ENCODE measurements at regions of chr4 and their contacts with region 1.

Region 1: DNA sequence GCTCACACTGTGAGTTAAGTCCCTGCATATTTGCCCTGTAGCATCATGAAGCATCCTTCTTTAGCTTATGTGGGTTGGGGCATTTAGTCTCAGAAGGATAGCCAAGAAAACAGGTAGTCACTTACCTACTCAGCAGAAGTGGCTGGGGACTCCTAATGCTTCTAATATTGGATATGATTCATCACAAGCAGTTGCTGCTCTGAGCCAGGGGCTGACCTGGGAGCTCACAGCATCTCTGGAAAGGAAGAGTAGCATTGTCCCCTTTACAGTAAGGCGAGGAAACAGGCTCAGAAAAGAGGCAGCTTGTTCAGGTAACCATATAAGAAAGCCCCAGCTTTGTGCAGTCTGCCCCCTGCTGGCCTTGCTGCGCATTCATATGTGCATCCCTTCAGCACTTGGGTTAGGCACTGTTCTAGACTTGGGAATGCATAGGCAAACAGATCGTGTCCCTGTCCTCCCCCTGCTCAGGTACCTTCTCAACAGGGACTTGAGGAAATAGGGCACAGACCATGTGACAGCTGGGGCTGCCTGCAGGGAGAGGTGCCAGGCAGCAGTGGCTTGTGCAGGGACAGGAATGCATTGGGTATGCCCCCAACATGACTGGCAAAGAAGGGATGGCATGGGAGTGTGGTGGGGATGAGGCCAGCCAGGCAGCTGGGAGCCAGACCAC is 35.7 kb upstream of the TBC1D14 start:
- DNase-seq: peak; percentile 79
- H3K4me3 ChIP-seq: no peak overlapping the region
- H3K27ac ChIP-seq: no peak overlapping the region
- H3K4me1 ChIP-seq: no peaks in the 10 kb centered on the region
- H3K27me3 ChIP-seq: no peaks in the 10 kb centered on the region
- CTCF ChIP-seq: peak; percentile 79 to 85 (median 83)
- EP300 ChIP-seq: no peak
- POLR2A ChIP-seq: no peak

Region 2: DNA sequence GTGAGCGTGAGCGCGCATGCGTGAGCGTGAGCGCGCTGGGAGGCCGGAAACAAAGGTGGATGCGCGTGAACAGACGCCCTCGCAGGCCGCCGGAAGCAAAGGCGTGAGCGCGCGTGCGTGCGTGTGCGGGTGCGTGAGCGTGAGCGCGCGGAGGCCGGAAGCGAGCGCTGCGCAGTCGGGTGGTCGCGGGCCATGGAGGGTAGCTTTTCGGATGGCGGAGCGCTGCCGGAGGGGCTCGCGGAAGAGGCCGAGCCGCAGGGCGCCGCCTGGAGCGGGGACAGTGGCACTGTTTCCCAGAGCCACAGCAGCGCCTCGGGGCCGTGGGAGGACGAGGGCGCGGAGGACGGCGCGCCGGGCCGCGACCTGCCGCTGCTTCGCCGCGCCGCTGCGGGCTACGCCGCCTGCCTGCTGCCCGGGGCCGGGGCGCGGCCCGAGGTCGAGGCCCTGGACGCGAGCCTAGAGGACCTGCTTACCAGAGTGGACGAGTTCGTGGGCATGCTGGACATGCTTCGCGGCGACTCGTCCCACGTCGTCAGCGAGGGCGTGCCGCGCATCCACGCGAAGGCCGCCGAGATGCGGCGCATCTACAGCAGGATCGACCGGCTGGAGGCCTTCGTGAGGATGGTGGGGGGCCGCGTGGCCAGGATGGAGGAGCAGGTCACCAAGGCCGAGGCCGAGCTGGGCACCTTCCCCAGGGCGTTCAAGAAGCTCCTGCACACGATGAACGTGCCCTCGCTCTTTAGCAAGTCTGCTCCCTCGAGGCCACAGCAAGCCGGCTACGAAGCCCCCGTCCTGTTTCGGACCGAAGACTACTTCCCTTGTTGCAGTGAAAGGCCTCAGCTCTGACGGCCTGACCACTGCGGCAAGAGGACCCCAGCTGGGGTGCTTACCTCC is 157.7 kb before region 1 on chr4 and contains the start of gene BLOC1S4:
- in situ Hi-C with region 1: loop called in 2 of 4 experiments (anchors 5 to 25 kb)
- intact Hi-C with region 1: loop called (anchors 2 kb)
- DNase-seq: peak; percentile 90
- H3K4me3 ChIP-seq: peak within 1 kb of the TSS; percentile 69 to 84 (median 74)
- H3K27ac ChIP-seq: peak within 1 kb of the TSS; percentile 92 to 94 (median 93)
- H3K4me1 ChIP-seq: peaks cover 4 to 26% (median 12%) of the 10 kb centered on the region in 4 donors
- H3K27me3 ChIP-seq: no peaks in the 10 kb centered on the region
- CTCF ChIP-seq: peak in 2 of 5 experiments; percentile 10 to 41
- EP300 ChIP-seq: no peak
- POLR2A ChIP-seq: peak; percentile 84
- total RNA-seq, gene BLOC1S4: 1.00 to 18.8 (median 12.4) TPM

Region 3: GRCh38 chr4:6732441-6733357 is 141.2 kb before region 1 on chr4:
- in situ Hi-C with region 1: loop called in 2 of 4 experiments (anchors 5 to 10 kb)
- intact Hi-C with region 1: no loop called
- DNase-seq: peak; percentile 68
- H3K4me3 ChIP-seq: no peak overlapping the region
- H3K27ac ChIP-seq: peak overlapping the region in 3 of 4 donors; percentile 14 to 63 (median 41)
- H3K4me1 ChIP-seq: peaks cover 0 to 11% (median 9%) of the 10 kb centered on the region in 4 donors
- H3K27me3 ChIP-seq: no peaks in the 10 kb centered on the region
- CTCF ChIP-seq: no peak
- EP300 ChIP-seq: no peak
- POLR2A ChIP-seq: no peak

Region 4: DNA sequence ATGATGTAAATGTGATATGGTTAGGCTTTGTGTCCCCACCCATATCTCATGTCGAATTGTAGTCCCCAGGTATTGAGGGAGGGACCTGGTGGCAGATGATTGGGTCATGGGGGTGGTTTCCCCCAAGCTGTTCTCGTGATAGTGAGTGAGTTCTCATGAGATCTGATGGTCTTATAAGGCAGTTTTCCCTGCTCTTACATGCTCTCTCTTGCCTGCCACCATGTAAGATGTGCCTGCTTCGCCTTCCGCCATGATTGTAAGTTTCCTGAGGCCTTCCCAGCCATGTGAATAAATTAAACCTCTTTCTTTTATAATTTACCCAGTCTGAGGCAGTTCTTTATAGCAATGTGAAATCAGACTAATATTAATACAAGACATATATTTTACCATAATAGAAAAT is 134.0 kb before region 1 on chr4:
- in situ Hi-C with region 1: loop called in 2 of 4 experiments (anchors 5 to 10 kb)
- intact Hi-C with region 1: no loop called
- DNase-seq: no peak
- H3K4me3 ChIP-seq: no peak overlapping the region
- H3K27ac ChIP-seq: no peak overlapping the region
- H3K4me1 ChIP-seq: no peaks in the 10 kb centered on the region
- H3K27me3 ChIP-seq: no peaks in the 10 kb centered on the region
- CTCF ChIP-seq: no peak
- EP300 ChIP-seq: no peak
- POLR2A ChIP-seq: no peak

Region 5: DNA sequence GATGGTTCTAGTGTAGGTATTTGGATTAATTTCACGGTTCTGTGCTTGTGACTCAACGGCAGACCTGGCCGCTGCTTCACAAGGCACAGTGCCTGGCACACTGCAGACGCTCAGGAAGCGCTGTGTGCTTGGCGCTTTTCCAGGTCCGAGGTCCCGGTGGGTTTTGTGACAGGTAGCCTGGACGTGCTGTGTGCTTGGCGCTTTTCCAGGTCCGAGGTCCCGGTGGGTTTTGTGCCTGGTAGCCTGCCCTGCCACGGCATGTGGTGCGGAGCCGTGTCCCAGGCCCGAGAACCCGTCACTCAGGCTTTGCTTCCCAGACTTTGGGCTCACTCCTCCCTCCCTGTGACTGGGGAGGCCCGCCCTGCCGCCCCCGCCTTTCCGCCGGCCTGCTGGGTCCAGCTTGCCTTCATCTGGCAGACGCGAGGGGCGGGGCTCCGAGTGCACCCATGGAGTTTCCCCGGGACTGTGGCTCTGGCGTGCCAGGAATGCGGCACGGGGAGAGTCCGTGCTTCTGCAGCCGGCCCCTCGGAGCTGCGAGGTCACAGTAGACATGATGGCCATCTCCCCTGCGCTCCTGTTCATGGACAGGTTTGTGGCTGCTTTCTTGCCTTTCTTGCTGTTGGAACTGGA is 79.9 kb after region 1 on chr4:
- in situ Hi-C with region 1: no loop called
- intact Hi-C with region 1: no loop called
- DNase-seq: peak; percentile 91
- H3K4me3 ChIP-seq: peak overlapping the region in 2 of 4 donors; percentile 12 to 37
- H3K27ac ChIP-seq: peak overlapping the region; percentile 68 to 82 (median 80)
- H3K4me1 ChIP-seq: peaks cover 5 to 52% (median 22%) of the 10 kb centered on the region in 4 donors
- H3K27me3 ChIP-seq: no peaks in the 10 kb centered on the region
- CTCF ChIP-seq: no peak
- EP300 ChIP-seq: no peak
- POLR2A ChIP-seq: peak; percentile 55